Right ventricle myocardium inferior (tissue), 1 donor: ENCODE measurements at regions of chr14 and their contacts with region 1.

Region 1: GRCh38 chr14:69129264-69129880 is 23.5 kb downstream of the DCAF5 start:
- DNase-seq: peak; percentile 67
- ATAC-seq: peak; percentile 70

Region 2: DNA sequence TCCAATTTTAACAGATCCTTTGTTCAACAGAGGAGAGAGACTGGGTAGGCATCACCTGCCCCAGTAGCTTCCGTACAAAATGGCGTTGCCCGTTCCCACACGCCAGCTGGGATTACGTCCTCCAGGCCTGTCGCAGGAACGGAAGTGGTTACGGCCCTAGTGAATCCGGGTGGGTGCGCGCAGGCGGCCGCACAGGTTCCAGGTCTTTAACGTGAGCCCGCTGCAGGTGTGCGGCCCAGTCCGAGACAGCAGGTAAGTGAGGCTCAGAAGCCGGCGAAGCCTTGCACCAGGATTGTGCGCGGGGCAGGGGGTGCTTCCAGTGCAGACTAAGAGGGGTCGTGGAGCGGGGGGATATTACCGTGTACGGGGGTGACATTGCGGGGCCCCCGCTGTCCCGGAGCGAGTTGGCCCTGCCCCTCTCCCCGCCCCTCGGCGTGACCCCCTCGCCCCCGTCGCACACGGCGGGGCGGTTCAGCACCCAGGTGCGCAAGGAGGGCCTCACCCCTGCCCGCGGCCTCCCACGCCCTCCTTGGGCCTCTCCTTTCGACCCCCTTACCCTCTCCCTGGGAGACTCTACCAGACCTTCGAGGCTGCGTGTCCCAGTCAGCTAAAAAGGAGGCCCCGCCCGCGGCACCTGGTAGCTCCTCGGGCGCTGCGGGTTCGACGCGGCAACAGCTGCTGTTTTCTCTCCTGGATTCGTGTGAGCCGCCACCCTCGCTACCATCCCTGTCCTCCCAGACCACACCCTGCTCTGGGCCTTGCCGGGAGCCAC is 62.2 kb after region 1 on chr14 and contains the start of gene EXD2:
- intact Hi-C with region 1: loop called (anchors 2 kb)
- DNase-seq: peak; percentile 90
- ATAC-seq: peak; percentile 98
- total RNA-seq, gene EXD2: 17.0 TPM

Region 3: DNA sequence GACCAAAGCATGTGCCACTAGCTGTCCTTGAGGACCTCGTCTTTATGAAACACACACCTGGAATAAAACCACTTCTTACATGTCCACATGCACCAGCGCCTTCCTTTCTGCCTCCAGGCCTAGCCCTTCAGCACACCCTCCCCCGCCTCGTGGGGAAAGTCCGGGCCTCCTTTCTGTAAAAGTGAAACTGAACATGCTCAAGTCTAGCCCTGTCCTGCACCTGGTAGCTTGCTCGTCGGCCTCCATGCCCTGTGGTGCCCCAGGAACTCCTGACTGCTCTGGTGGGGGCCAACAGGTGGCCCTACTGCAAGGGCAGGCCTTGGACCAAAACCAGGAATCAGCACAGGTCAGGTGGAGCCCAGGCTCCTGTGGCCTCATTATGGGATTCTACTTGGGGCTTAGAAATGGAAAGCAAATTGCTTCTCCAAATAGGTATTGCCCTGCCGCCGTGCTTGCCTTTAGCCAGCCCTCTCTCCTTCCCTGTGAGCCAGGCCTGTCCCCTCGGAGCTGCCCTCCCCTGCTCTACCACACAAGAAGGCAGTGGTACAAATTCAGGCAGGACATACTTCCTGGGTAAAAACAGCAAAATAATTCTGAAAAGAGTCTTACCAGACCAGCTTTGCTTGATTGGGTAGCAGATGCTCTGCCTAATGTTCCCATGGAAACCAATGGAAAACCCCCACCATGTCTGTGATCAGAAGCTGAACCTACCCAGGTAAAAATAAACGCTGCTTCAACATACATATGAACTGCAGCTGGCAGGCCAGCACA is 225.2 kb after region 1 on chr14:
- intact Hi-C with region 1: loop called (anchors 10 kb)
- DNase-seq: no peak
- ATAC-seq: no peak

Region 4: DNA sequence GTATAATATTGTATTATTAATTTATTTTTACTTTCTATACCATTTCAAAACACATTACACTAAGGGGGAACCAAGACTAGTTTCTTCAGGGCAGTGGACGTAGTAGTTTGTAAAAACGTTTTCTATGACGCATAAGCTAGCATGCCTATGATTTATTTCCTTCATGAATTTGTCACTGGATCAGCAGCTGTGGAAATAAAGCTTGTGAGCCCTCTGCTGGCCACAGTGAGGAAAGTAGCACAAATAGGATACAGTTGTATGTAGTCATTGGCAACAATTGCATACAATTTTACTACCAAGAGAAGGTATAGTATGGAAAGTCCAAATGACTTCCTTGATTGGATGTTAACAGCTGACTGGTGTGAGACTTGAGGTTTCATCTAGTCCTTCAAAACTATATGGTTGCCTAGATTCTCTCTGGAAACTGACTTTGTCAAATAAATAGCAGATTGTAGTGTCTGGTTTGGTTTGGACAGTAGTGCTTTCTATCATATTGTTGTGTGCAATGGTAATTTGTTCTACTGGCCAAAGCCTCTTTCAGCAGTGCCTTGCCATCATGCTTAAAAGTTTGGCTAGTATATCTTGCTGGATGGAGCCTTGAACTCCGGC is 330.8 kb after region 1 on chr14:
- intact Hi-C with region 1: loop called (anchors 1 kb)
- DNase-seq: no peak
- ATAC-seq: peak; percentile 79